Motor neuron (in vitro differentiated cells): ENCODE measurements at regions of chr16 and their contacts with region 1.

Region 1: DNA sequence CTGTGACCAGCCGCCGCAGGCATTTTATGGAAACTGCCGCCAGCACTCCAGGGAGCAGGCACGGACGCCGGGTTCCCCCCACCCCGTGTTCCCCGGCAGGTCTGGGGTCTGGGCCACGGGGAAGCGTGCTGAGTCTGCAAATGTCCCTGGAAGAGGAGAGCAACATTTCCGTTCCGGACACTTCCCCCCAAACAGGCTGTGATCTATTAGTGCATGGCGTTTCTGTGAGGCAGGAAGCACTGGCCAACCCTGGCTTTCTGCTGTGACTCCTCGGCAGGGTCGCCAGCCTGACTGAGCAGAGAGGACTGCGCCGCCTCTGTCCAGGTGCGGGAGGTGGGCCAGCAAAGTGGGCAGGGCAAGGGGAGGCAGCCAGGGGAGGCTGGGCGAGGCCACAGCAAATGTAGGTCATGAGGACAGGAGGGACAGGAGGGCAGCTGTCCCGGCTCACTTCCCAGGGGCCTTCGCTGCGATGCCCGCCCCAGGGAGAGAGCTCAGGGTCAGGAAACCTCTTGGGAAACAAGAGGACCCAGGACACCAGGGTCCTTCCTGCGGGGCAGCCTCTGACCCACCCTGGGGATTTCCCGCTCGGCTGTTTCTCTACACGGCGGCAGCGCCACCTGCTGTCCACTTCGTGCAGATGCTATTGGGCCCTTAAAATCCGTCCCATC is 9.5 kb downstream of the FOXF1 start:
- ATAC-seq: peak; percentile 39 to 79 (median 50)
- H3K4me3 ChIP-seq: no peak overlapping the region
- H3K27ac ChIP-seq: no peak overlapping the region
- H3K4me1 ChIP-seq: peaks cover 0 to 7% of the 10 kb centered on the region in 2 donors

Region 2: GRCh38 chr16:85799497-85800337 is 720.1 kb before region 1 on chr16 and contains the starts of genes COX4I1 and EMC8:
- in situ Hi-C with region 1: loop called in 4 of 9 experiments (anchors 25 kb)
- ATAC-seq: peak; percentile 83 to 94 (median 89)
- H3K4me3 ChIP-seq: peak within 1 kb of the TSS; percentile 53 to 97 (median 67)
- H3K27ac ChIP-seq: peak within 1 kb of the TSS; percentile 83 to 89
- H3K4me1 ChIP-seq: peaks cover 13 to 17% of the 10 kb centered on the region in 2 donors
- total RNA-seq, gene COX4I1: 531 to 741 (median 580) TPM
- total RNA-seq, gene EMC8: 13.5 to 32.5 (median 25.6) TPM

Region 3: GRCh38 chr16:85821441-85822135 is 698.2 kb before region 1 on chr16:
- in situ Hi-C with region 1: loop called in 7 of 9 experiments (anchors 5 to 25 kb)
- ATAC-seq: peak; percentile 73 to 99 (median 96)
- H3K4me3 ChIP-seq: no peak overlapping the region
- H3K27ac ChIP-seq: no peak overlapping the region
- H3K4me1 ChIP-seq: peaks cover 2 to 5% of the 10 kb centered on the region in 2 donors

Region 4: GRCh38 chr16:86072328-86073102 is 447.3 kb before region 1 on chr16:
- in situ Hi-C with region 1: loop called in 8 of 9 experiments (anchors 10 to 25 kb)
- ATAC-seq: peak; percentile 49 to 78 (median 67)
- H3K4me3 ChIP-seq: no peak overlapping the region
- H3K27ac ChIP-seq: no peak overlapping the region
- H3K4me1 ChIP-seq: peaks cover 0 to 12% of the 10 kb centered on the region in 2 donors

Region 5: DNA sequence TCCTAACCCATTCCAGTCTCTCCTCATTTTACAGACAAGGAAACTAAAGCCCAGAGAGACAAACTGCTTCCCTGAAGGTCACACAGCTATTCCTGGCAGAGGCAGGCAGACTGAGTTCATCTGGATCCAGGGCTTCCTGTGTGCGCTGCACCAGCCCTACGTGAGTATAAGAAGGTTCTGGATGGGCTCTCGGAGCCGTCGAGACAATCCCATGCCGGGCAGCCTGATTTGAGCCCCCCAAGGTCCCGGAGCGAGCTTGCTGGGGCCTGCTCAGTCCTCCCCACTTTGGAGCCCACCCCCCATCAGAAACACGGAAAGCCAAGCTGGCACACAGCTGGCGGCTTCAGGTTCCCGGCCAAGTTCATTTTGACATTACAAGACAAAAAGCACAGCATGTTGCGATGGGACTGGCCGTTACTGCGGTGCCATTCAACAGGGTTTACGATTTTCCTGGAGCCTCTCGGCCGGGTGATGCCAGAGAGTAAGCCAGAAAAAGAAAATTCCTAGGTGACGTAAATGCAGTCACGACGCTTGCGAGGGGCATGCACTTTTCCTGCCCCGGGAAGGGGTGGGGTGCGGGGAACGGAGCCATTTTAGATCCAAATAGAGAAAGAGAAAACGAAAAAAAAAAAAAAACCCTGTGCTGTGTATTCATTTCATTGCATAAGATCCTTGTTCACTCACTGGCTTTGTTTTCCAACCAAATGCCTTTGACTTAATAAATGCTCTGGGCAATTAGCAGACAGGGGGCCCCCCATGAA is 176.6 kb before region 1 on chr16:
- in situ Hi-C with region 1: loop called in 2 of 9 experiments (anchors 25 kb)
- ATAC-seq: peak in 7 of 8 experiments; percentile 37 to 59 (median 46)
- H3K4me3 ChIP-seq: no peak overlapping the region
- H3K27ac ChIP-seq: no peak overlapping the region
- H3K4me1 ChIP-seq: peaks cover 7 to 18% of the 10 kb centered on the region in 2 donors

Region 6: GRCh38 chr16:86479419-86479818 is 40.4 kb before region 1 on chr16:
- in situ Hi-C with region 1: no loop called
- ATAC-seq: no peak
- H3K4me3 ChIP-seq: no peak overlapping the region
- H3K27ac ChIP-seq: no peak overlapping the region
- H3K4me1 ChIP-seq: no peaks in the 10 kb centered on the region